Right ventricle myocardium inferior (tissue), 1 donor: ENCODE measurements at regions of chr4 and their contacts with region 1.

Region 1: DNA sequence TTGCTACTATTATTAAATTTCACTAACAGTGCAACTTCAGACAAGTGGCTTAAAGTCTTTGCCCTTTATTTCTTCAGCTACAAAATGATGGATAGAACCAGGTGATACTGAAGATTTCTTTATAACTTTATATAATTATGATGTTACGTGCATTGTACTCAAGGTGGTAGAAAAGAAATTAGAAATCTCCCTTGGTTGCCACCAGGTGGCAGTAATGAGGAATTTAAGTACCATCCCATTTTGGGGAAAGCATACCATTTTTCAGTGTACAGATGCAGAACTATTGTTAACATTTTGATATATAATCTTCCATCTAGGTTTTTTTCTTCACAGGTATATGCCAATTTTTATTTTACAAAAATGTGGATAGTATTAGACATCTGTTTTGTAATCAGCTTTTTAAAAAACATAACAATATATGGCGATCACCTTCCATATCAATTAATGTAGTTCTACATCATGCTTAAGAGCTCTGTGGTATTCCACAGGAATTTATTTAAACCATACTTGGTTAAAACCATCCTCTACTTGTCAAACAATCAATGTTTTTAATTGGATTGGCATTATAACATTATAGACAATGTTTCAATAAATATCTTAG is 37.7 kb upstream of the RAB33B start:
- DNase-seq: no peak
- ATAC-seq: no peak

Region 2: DNA sequence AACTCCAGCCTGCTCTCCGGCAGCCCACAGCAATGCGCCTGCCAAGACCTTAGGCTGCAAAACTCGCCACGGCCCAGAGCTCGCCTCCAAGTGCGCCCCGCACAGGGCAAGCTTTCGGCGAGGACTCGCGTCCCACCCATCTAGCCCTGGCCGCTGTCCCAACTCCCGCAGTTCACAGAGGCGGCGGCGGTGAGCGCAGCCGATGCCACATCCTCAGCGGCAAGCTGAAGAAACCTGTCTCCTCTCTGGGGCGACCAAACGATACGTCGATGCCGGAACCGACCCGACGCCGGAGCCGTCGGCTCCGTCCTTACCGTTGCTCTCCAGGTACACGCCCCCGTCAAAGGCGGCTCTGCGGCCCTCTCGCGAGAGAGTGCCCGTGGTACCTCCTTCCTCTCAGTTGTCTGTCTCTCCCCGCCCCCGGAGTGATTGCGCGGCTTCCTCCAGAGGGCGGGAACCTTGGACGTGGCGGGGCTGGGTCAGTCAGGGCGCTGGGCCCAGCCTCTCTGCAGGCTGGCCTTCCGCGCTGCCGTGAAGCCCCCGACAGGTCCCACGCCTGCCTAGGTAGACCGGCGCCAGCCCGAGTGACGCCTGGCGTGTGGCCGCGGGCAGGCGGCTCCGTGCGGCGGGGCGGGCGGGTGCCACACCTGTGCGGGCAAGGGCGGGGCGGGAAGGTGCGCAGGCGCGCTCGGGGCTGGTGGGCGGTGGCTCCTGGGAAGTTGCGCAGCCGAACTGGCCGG is 37.4 kb after region 1 on chr4:
- intact Hi-C with region 1: loop called (anchors 5 kb)
- DNase-seq: peak; percentile 99
- ATAC-seq: peak; percentile 98

Region 3: DNA sequence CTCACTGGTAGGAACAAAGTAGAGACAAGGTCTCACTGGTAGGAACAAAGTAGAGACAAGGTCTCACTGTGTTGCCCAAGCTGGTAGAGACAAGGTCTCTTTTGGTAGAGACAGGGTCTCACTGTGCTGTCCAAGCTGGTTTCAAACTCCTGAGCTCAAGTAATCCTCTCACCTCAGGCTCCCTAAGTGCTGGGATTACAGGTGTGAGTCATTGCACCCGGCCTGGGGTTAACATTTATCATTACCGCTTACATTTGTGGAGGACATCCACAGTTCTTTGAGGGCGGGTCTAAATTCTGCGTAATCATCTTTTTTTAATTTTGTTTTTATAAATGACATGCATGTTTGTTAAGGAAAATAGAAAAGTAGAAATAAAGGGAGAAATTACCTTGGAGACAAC is 49.7 kb after region 1 on chr4:
- intact Hi-C with region 1: no loop called
- DNase-seq: no peak
- ATAC-seq: no peak

Region 4: DNA sequence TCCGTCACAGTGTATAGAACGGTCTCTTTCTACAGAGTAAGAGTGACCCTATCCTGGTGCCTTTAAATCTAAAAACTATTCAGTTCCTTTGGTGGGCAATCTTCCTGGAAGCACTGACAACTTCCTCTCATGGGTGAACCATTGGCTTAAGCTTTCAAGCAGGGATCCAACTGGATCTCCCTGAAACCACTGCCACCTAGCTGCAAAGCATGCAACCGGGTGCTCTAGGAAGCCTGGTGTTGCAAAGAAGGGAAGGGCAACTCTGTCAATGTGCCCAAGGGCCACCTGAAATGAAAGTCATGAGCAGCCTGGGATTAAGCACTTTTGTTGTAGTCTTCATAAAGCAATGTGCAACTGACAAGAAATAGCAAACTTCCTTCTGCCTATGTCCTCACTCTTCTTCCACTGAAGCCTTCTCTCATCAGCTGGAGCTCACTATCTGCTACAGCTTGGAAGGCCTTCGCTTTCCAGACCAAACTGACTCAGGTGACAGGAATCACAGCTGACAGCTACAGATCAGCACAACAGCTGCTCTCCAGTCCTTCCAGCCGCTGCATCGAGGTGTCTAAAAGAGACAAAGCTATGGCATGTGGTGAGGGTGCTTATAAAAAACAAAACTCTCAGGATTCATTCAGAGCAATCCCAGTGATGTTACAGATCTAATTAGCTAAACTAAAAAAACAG is 93.7 kb after region 1 on chr4:
- intact Hi-C with region 1: loop called (anchors 5 kb)
- DNase-seq: no peak
- ATAC-seq: peak; percentile 66

Region 5: GRCh38 chr4:139530833-139531427 is 114.8 kb after region 1 on chr4:
- intact Hi-C with region 1: loop called (anchors 5 kb)
- DNase-seq: no peak
- ATAC-seq: peak; percentile 51